SK-N-SH (cell line): ENCODE measurements at regions of chr7 and their contacts with region 1.

Region 1: GRCh38 chr7:74401137-74401859 is 52.4 kb upstream of the GTF2IRD1 start:
- DNase-seq: peak; percentile 91
- H3K4me3 ChIP-seq: no peak overlapping the region
- H3K27ac ChIP-seq: no peak overlapping the region
- H3K4me1 ChIP-seq: no peaks in the 10 kb centered on the region
- H3K27me3 ChIP-seq: no peaks in the 10 kb centered on the region
- CTCF ChIP-seq: peak; percentile 100
- EP300 ChIP-seq: no peak
- RAD21 ChIP-seq: peak; percentile 97

Region 2: DNA sequence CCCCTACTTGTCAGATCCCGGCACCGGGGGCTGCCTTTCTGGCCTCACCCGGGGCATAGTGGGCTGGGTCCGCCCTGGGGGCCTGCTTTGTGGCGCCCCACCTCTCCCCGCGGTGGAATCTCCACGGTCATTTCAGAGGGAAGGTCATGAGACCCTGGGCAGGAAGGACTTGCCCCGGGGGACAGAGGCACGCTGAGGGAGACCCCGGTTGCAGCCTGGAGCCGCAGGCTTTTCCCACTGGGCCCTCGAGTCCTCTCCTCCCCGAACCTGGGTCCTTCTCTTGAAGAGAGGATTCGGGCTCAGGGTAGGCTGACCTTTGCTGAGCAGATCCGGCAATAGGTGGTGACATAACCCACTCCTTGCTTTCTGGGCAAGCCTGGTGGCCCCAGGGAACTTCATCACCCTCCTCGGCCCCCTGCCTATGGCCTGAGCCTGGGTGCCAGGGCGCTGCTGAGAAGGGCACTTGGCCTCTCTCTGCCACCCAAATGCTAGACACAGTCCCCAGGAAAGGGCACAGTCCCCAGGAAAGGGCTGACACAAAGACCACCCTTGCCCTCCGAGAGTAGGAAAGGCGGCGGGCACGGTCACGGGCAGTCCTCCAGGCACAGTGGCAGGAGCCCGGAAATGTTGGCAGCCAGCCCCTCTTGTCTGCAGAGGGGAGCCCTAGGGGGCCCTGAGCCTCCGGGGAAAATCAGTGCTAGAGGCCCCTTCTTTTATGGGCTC is 1037.1 kb before region 1 on chr7:
- CTCF ChIA-PET with region 1: no interaction called
- POLR2A ChIA-PET with region 1: no interaction called
- DNase-seq: peak; percentile 49
- H3K4me3 ChIP-seq: no peak overlapping the region
- H3K27ac ChIP-seq: no peak overlapping the region
- H3K4me1 ChIP-seq: no peaks in the 10 kb centered on the region
- H3K27me3 ChIP-seq: peaks cover 12% of the 10 kb centered on the region; the same call in 1 of the 2 replicates
- CTCF ChIP-seq: no peak
- EP300 ChIP-seq: no peak
- RAD21 ChIP-seq: no peak

Region 3: DNA sequence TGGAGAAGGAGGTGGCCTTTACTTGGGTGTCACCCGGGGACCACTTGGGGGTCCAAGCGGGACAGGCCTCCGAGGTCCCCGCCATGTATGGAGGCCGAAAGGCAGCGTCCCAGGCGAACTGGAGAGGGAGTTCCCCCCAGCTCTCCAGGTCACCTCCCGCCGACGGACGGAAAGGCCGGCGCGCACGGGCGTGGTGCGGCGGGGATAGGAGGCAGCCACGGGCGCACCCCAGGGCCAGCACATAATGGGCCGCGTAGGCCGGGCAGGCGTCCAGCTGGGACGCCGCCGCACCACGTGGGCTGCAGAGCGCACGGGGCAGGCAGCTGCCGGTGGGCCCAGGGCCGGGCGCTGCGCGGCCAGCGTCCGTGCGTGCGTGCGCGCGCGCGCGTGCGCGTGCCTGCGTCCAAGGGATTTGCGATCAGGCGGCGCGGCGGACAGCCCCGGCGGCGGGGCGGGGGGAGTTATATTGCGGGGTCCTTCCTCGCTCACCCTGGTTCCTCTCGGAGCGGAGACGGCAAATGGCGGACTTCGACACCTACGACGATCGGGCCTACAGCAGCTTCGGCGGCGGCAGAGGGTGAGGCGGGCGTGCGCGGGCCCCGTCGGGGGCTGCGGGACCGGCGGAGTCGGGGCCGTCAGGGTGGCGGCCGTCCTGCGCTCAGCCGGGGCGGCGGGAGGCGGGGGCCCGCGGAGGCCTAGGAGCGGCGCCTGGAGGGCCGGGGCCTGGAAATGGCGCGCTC is 227.3 kb before region 1 on chr7 and contains the start of gene EIF4H:
- CTCF ChIA-PET with region 1: interaction called, 15 read pairs
- POLR2A ChIA-PET with region 1: no interaction called
- DNase-seq: peak; percentile 100
- H3K4me3 ChIP-seq: peak within 1 kb of the TSS; percentile 72 to 88
- H3K27ac ChIP-seq: peak within 1 kb of the TSS; percentile 76 to 84
- H3K4me1 ChIP-seq: peaks cover 11 to 24% of the 10 kb centered on the region in 2 experiments; a peak in 3 of 4 replicates
- H3K27me3 ChIP-seq: no peaks in the 10 kb centered on the region
- CTCF ChIP-seq: no peak
- EP300 ChIP-seq: peak in 1 of 2 experiments; percentile 38; a peak in 1 of 4 replicates
- RAD21 ChIP-seq: 0 out of 2 replicates have a peak, but pooled peaks have one; percentile 10
- polyA plus RNA-seq, gene EIF4H: 443 and 468 TPM in 2 replicates

Region 4: GRCh38 chr7:74242122-74242443 is 159.2 kb before region 1 on chr7:
- CTCF ChIA-PET with region 1: interaction called, 12 read pairs
- POLR2A ChIA-PET with region 1: no interaction called
- DNase-seq: no peak
- H3K4me3 ChIP-seq: no peak overlapping the region
- H3K27ac ChIP-seq: no peak overlapping the region
- H3K4me1 ChIP-seq: no peaks in the 10 kb centered on the region
- H3K27me3 ChIP-seq: no peaks in the 10 kb centered on the region
- CTCF ChIP-seq: no peak
- EP300 ChIP-seq: no peak
- RAD21 ChIP-seq: no peak

Region 5: GRCh38 chr7:74294191-74294998 is 106.9 kb before region 1 on chr7:
- CTCF ChIA-PET with region 1: interaction called, 57 read pairs
- POLR2A ChIA-PET with region 1: no interaction called
- DNase-seq: peak; percentile 79
- H3K4me3 ChIP-seq: no peak overlapping the region
- H3K27ac ChIP-seq: peak overlapping the region in 1 of 2 experiments; percentile 78; a peak in 3 of 4 replicates
- H3K4me1 ChIP-seq: peaks cover 12 to 34% of the 10 kb centered on the region in 2 experiments; a peak in 3 of 4 replicates
- H3K27me3 ChIP-seq: no peaks in the 10 kb centered on the region
- CTCF ChIP-seq: no peak
- EP300 ChIP-seq: no peak
- RAD21 ChIP-seq: no peak

Region 6: DNA sequence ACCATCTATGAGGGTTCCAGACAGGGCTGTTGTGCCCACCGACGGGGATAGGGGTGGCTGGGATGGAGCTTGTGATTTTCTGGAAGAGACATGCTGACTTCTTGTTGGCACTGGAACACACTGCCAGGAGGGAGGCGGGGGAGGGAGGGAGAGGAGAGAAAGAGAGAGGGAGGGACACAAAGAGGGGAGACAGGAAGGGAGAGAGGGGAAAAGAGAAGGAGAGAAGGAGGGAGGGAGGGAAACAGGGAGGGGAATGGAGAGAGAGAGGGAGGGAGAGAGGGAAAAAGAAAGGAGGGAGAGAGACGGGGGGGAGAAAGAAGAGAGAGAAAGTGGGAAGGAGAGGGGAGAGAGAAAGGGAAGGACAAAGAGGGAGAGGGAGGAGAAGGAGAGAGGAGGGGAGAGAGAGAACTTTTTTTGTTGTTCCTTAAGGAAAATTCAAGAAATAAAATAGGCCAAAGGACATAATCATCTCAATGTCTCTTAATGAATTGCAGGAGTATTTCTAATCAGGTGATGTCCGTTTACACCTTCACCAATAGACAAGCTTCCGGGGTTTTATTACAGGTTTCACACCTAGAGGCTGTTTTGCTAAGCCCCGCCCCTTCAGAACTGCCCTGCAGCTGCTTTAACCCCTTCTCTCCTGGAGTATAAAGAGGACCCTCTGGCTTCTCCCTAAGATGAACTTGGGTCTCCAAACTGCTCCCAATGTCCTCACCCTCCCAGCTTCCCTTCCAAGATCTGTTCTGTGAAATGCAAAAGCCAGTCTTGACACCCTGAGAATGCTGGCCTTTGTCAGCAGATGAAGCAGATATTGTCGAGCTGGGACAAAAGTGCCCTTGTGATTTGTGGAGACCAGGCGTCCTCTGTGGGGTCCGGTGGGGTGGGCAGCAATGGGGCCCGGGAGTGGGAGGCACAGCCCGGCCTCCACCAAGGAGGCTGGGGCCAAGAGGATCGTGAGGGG is 29.6 kb before region 1 on chr7:
- CTCF ChIA-PET with region 1: interaction called, 47 read pairs
- POLR2A ChIA-PET with region 1: no interaction called
- DNase-seq: no peak
- H3K4me3 ChIP-seq: no peak overlapping the region
- H3K27ac ChIP-seq: 0 out of 4 replicates have a peak overlapping the region, but pooled peaks of 1 of the 2 experiments have one; percentile 4
- H3K4me1 ChIP-seq: no peaks in the 10 kb centered on the region; a peak in 1 of 4 replicates
- H3K27me3 ChIP-seq: no peaks in the 10 kb centered on the region
- CTCF ChIP-seq: no peak
- EP300 ChIP-seq: no peak
- RAD21 ChIP-seq: no peak

Region 7: DNA sequence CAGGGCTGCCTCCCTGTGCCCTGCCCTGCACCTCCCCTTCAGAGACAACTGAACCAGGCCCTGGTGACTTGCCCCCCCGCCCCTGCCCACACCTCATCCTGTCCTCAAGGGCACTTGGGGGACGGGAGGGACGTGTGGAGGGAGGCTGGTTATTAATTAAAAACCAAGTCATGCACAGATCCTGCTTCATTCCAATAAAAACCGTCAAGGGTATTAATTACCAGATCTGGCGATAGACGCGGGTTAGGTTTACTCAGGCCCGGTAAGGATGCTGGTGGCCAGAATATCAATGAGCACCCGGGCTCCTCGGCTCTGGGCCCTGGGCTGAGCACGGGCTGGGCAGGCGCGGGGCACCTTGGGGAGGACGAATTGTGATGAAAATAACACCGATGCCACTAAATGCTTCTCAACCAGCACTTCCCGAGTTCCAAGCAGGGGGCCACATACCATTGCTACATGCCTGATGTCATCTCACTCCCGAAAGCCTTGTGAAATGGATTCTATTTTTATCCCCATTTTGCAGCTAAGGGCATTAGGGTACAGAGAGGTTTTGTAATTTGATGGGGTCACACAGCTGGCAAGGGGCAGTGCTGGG is 28.0 kb after region 1 on chr7:
- CTCF ChIA-PET with region 1: interaction called, 13 read pairs
- POLR2A ChIA-PET with region 1: no interaction called
- DNase-seq: peak; percentile 36
- H3K4me3 ChIP-seq: no peak overlapping the region
- H3K27ac ChIP-seq: no peak overlapping the region
- H3K4me1 ChIP-seq: peaks cover 0 to 8% of the 10 kb centered on the region in 2 experiments; a peak in 2 of 4 replicates
- H3K27me3 ChIP-seq: no peaks in the 10 kb centered on the region
- CTCF ChIP-seq: no peak
- EP300 ChIP-seq: no peak
- RAD21 ChIP-seq: no peak